CD4-positive, alpha-beta memory T cell (primary cell): ENCODE measurements at regions of chr12 and their contacts with region 1.

Region 1: GRCh38 chr12:14960548-14961465 is 594 bp downstream of the ARHGDIB start:
- DNase-seq: peak; percentile 72 to 78 (median 76)
- H3K4me3 ChIP-seq: peak overlapping the region; percentile 77 to 90
- H3K4me3 Mint-ChIP-seq: peak overlapping the region; percentile 96 to 100 (median 99)
- H3K27ac ChIP-seq: peak overlapping the region; percentile 92
- H3K27ac Mint-ChIP-seq: peak overlapping the region; percentile 97 to 99 (median 98)
- H3K4me1 ChIP-seq: peaks cover 64% of the 10 kb centered on the region
- H3K4me1 Mint-ChIP-seq: peaks cover 33 to 89% (median 48%) of the 10 kb centered on the region in 4 donors
- H3K27me3 ChIP-seq: no peaks in the 10 kb centered on the region
- H3K27me3 Mint-ChIP-seq: no peaks in the 10 kb centered on the region

Region 2: DNA sequence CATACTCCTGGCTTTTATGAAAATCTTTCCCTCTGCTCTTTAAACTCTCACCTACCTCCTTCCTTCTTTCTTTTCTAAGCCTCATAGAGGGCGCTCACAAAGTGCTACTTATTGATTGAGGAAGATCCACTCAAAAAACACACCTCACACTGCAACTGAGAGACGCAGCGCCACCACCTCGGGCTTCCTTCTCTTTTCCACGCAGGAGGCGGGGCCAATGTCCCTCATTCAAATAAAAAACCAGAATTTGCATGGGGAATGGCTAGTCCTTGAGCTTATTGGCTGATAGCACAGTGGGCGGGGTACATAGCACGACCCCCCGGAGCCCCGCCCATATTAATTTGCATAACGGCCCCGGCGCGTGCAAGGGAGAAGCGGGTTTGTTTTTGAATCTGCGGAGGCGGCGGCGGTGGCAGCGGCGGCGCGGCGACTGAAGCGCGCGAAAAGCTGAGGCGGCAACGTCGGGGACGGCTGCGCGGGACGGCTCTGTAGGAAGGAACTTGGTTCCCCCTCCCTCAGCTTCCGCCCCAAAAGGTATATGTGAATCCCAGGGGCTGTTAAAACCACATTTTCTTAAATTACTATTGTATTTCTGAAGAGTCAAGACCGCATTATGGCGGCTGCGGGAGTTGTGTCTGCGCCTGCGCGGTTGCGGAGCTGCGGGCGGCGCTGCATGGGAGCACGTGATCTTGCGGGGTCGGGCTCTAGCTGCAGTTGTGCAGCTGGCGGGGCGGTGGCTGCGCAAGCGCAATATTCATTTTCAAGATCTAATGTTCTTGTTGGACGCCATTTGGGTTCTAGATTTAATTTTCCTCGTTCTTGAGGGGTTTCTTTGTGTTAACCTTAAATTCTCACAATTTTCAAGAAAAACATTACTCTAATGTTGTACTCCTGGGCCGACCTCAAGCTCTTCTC is 595.3 kb before region 1 on chr12 and contains the start of gene ATF7IP:
- CTCF ChIA-PET with region 1: no interaction called
- POLR2A ChIA-PET with region 1: interaction called, 11 read pairs
- intact Hi-C with region 1: loop called (anchors 1 kb)
- DNase-seq: peak; percentile 95 to 97 (median 97)
- H3K4me3 ChIP-seq: peak within 1 kb of the TSS; percentile 45 to 81
- H3K4me3 Mint-ChIP-seq: peak within 1 kb of the TSS; percentile 82 to 99 (median 92)
- H3K27ac ChIP-seq: peak within 1 kb of the TSS; percentile 90
- H3K27ac Mint-ChIP-seq: peak within 1 kb of the TSS; percentile 85 to 99 (median 96)
- H3K4me1 ChIP-seq: peaks cover 34% of the 10 kb centered on the region
- H3K4me1 Mint-ChIP-seq: peaks cover 11 to 55% (median 29%) of the 10 kb centered on the region in 4 donors
- H3K27me3 ChIP-seq: no peaks in the 10 kb centered on the region
- H3K27me3 Mint-ChIP-seq: no peaks in the 10 kb centered on the region
- total RNA-seq, gene ATF7IP: 209 to 223 TPM

Region 3: DNA sequence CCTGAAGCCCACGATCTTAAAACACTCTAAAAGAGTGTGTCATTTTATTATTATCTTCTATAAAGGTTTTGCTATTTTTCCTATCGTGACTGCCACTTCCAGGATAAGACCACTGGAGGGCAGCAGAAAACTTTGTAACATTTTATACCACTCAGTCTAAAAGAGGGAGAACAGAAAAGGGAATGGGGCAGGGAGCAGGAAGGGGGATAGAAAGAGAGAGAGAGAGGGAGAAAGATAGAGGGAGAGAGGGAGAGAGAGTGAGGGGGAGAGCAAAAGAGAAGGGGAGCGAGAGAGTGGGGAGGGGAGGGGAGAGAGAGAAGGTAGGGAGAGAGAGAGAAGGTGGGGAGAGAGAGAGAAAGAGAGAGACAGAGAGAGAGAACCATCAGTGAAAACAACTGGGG is 115.5 kb before region 1 on chr12:
- CTCF ChIA-PET with region 1: interaction called, 3 read pairs
- POLR2A ChIA-PET with region 1: interaction called, 3 read pairs
- intact Hi-C with region 1: loop called (anchors 1 kb)
- DNase-seq: peak in 4 of 5 donors; percentile 50 to 59 (median 56)
- H3K4me3 ChIP-seq: no peak overlapping the region
- H3K4me3 Mint-ChIP-seq: peak overlapping the region in 1 of 8 donors; percentile 11
- H3K27ac ChIP-seq: no peak overlapping the region
- H3K27ac Mint-ChIP-seq: no peak overlapping the region
- H3K4me1 ChIP-seq: peaks cover 3% of the 10 kb centered on the region
- H3K4me1 Mint-ChIP-seq: peaks cover 0 to 5% (median 1%) of the 10 kb centered on the region in 4 donors
- H3K27me3 ChIP-seq: no peaks in the 10 kb centered on the region
- H3K27me3 Mint-ChIP-seq: no peaks in the 10 kb centered on the region

Region 4: GRCh38 chr12:14948672-14949071 is 12.1 kb before region 1 on chr12:
- CTCF ChIA-PET with region 1: interaction called, 11 read pairs
- POLR2A ChIA-PET with region 1: interaction called, 104 read pairs
- intact Hi-C with region 1: loop called (anchors 1 kb)
- DNase-seq: peak; percentile 76 to 86 (median 83)
- H3K4me3 ChIP-seq: peak overlapping the region; percentile 20 to 52
- H3K4me3 Mint-ChIP-seq: peak overlapping the region; percentile 73 to 93 (median 84)
- H3K27ac ChIP-seq: peak overlapping the region; percentile 92
- H3K27ac Mint-ChIP-seq: peak overlapping the region; percentile 94 to 100 (median 97)
- H3K4me1 ChIP-seq: peaks cover 91% of the 10 kb centered on the region
- H3K4me1 Mint-ChIP-seq: peaks cover 63 to 92% (median 85%) of the 10 kb centered on the region in 4 donors
- H3K27me3 ChIP-seq: no peaks in the 10 kb centered on the region
- H3K27me3 Mint-ChIP-seq: no peaks in the 10 kb centered on the region

Region 5: GRCh38 chr12:14981049-14981448 is 20.2 kb after region 1 on chr12:
- CTCF ChIA-PET with region 1: interaction called, 4 read pairs
- POLR2A ChIA-PET with region 1: interaction called, 8 read pairs
- intact Hi-C with region 1: loop called (anchors 1 kb)
- DNase-seq: no peak
- H3K4me3 ChIP-seq: no peak overlapping the region
- H3K4me3 Mint-ChIP-seq: peak overlapping the region in 1 of 8 donors; percentile 11
- H3K27ac ChIP-seq: no peak overlapping the region
- H3K27ac Mint-ChIP-seq: peak overlapping the region in 3 of 7 donors; percentile 34 to 66 (median 36)
- H3K4me1 ChIP-seq: peaks cover 38% of the 10 kb centered on the region
- H3K4me1 Mint-ChIP-seq: peaks cover 39 to 57% (median 48%) of the 10 kb centered on the region in 4 donors
- H3K27me3 ChIP-seq: no peaks in the 10 kb centered on the region
- H3K27me3 Mint-ChIP-seq: no peaks in the 10 kb centered on the region